GM13977 (cell line): ENCODE measurements at regions of chr3 and their contacts with region 1.

Region 1: GRCh38 chr3:39288300-39288808 is 8.5 kb upstream of the CX3CR1 start:
- DNase-seq: peak; percentile 95
- CTCF ChIP-seq: peak; percentile 96

Region 2: DNA sequence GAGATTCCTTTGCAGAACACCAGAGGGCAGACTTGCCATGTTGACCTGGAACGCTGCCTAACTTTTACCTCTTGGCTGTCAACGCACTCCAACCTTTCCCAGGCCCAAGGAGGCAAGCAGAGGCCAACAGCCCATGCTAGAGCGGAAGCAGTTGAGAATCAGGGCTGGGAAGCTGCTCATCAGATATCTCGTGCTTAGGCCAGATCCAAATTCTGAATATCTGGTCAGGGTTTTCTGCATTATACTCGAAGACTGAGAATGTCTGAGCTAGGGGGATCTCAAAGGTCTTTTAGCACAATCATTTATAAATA is 98.4 kb before region 1 on chr3:
- in situ Hi-C with region 1: loop called (anchors 5 kb)
- DNase-seq: peak; percentile 86
- CTCF ChIP-seq: peak; percentile 69